Cardiac septum (tissue), 1 donor: ENCODE measurements at regions of chr7 and their contacts with region 1.

Region 1: DNA sequence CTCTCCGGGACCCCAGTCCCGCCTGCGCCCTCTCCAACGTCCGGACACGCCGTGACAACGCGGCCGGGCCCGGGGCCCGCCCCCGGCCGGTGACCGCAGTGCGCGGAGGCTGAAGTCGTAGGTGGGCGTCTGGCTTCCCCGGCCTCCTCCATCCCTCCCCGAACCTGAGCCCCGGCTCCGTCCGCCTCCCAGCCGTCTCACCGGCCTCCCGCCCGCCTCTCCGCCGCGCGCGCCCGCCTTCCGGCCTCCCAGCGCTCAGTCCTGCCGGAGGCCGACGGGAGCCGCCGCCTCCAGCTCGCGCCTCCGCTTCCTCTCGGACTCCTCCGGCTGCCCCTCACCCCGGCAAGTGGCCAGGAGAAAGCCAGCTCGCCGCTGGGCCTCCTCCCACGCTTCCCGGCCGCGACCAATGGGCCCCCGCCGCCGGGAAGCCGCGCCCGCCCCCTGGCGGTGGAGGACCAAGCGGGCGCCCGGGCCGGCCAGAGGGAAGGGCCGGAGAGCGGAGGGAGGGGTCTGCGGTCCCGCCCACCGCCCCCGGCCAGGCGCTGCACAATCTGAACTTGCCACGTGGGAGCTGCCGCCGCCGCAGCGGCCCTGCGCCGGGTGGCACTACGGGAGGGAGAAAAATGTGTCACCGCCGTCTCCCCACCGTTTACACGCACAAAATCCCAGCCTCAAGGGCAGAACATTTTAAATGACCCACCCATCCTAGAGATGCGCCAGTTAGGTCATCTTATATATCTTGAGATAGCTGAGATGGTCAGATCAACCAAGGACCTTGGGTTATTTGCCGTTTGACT is at the start of gene FAM3C:
- DNase-seq: peak; percentile 95
- total RNA-seq, gene FAM3C: 51.0 TPM

Region 2: DNA sequence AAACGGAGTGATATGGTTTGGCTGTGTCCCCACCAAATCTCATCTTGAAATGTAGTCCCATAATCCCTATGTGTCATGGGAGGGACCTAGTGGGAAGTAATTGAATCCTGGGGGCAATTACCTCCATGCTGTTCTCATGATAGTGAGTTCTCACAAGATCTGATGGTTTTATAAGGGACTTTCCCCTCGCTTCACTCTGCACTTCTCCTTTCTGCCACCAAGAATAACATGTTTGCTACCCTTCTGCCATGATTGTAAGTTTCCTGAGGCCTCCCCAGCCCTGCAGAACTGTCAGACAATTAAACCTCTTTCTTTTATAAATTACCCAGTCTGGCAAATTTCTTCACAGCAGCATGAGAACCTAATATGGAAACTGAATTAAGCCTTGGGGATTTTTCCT is 19.2 kb before region 1 on chr7:
- intact Hi-C with region 1: no loop called
- DNase-seq: no peak

Region 3: GRCh38 chr7:121420979-121421378 is 24.8 kb after region 1 on chr7:
- intact Hi-C with region 1: no loop called
- DNase-seq: no peak

Region 4: DNA sequence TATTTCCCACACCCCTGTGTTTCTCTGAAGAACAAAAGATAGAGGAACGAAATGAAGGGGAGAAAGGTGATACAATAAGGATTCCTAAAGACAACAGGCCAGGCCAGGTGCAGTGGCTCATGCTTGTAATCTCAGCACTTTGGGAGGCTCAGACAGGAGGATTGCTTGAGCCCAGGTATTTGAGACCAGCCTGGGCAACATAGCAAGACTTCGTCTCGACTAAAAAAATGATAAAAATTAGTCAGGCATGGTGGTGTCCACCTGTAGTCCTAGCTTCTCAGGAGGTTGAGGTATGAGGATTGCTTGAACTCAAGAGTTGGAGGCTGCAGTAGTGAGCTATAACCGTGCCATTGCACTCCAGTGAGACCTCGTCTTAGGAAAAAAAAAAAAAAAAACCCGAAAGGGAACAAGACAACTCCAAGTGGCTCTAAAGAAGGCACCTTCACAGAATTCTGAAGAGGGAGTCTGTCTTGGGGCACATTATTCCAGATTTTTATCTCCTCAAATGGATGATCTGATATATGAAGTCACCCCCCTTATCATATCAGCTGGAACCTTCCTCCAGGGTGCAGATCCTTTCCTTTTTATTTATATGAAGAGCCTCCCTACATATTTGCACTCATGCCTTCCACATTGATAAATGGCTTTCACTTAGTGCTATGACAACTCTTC is 41.4 kb after region 1 on chr7:
- intact Hi-C with region 1: loop called (anchors 5 kb)
- DNase-seq: no peak

Region 5: GRCh38 chr7:121544238-121544637 is 148.1 kb after region 1 on chr7:
- intact Hi-C with region 1: no loop called
- DNase-seq: no peak